PC-9 (cell line): ENCODE measurements at regions of chr12 and their contacts with region 1.

Region 1: DNA sequence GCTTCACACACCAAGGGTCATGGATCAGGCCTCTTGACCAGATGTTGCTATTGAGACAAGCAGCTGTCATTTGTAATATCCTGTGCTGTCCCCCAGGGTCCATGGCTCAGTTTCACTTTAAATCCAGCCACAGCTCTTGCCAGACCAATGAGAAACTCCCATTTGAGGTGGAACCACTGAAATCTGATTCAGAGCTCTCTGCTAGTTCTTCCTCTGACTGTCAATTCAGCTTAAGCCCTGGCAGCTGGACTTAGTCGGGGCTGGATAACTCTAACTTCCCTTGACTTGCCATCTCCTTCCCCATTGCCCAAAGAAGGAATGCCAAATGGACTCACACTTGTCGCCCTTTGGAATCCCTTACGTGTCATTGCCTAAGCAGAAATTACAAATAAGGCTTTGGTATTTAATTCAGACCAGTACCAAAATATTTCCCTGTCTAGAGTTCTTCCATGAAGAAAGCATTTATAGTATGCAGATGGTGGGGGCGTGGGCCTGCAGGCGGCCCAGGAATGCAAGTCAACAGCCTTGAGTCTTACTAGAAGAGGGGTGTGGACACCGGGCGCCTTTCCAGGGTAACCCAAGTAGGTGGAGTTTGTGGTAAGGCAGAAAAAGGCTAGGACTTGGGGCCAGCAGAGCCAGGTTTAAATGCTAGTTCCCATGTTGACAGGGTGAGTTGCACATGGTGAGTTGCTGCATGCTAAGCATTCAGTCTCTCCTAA is 96.9 kb upstream of the TMPO start:
- DNase-seq: peak; percentile 93 to 97
- H3K4me3 ChIP-seq: peak overlapping the region; percentile 6; the same call in 1 of the 2 replicates
- H3K27ac ChIP-seq: peak overlapping the region; percentile 77
- H3K4me1 ChIP-seq: peaks cover 20% of the 10 kb centered on the region
- H3K27me3 ChIP-seq: no peaks in the 10 kb centered on the region
- CTCF ChIP-seq: no peak

Region 2: DNA sequence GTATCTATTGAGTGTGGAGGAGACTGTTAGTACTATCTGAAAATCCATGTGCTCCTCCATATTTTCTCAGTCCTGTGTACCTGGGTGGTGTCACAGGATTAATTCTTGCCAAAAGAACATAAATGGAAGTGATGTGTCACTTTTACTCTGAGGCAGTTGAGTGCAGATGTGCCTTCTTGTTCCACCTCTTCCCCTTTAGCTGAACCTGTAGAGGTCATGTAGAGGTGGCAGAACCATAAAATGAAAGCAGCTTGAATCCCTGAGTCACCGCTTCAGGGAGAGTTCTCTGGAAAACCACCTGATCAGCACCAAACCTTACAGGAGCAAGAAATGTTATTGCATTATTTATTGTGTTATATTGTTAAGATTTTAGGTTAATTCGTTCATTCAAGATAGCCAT is 160.3 kb after region 1 on chr12:
- CTCF ChIA-PET with region 1: interaction called, 3 read pairs
- POLR2A ChIA-PET with region 1: interaction called, 22 read pairs
- intact Hi-C with region 1: no loop called
- DNase-seq: peak in 1 of 2 experiments; percentile 38
- H3K4me3 ChIP-seq: no peak overlapping the region
- H3K27ac ChIP-seq: no peak overlapping the region
- H3K4me1 ChIP-seq: peaks cover 6% of the 10 kb centered on the region; the same call in 1 of the 2 replicates
- H3K27me3 ChIP-seq: no peaks in the 10 kb centered on the region
- CTCF ChIP-seq: no peak

Region 3: GRCh38 chr12:98612696-98613334 is 194.3 kb after region 1 on chr12:
- CTCF ChIA-PET with region 1: no interaction called
- POLR2A ChIA-PET with region 1: interaction called, 38 read pairs
- intact Hi-C with region 1: no loop called
- DNase-seq: no peak
- H3K4me3 ChIP-seq: no peak overlapping the region
- H3K27ac ChIP-seq: no peak overlapping the region
- H3K4me1 ChIP-seq: no peaks in the 10 kb centered on the region
- H3K27me3 ChIP-seq: no peaks in the 10 kb centered on the region
- CTCF ChIP-seq: no peak